ENCODE measurements at regions of chr19 and their contacts with region 1.

Region 1: DNA sequence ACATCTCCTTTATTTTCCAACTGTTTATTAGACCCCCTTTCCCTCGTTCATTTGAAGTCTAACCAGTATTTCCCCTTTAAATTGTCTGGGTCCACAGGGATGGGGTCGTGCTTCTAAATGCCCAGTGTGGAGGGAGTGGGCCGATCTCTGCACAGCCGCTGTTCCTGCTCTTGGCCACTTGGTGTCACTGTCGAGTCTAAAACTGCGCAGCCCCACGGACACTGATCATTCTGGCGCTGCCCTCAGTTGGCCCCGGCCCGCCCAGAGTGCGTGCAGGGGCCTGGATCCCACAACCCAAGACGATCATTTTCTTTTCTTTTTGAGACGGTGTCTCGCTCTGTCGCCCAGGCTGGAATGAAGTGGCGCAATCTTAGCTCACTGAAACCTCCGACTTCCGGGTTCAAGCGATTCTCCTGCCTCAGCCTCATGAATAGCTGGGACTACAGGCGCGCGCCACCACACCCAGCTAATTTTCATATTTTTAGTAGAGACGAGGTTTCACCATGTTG is 12.0 kb downstream of the WDR88 start:
- DNase-seq: peak; percentile 30 to 83 (median 51)
- ATAC-seq: peak; percentile 99
- H3K4me3 ChIP-seq: no peak overlapping the region
- H3K4me3 Mint-ChIP-seq: no peak overlapping the region
- H3K27ac ChIP-seq: no peak overlapping the region
- H3K27ac Mint-ChIP-seq: no peak overlapping the region
- H3K4me1 ChIP-seq: peaks cover 5% of the 10 kb centered on the region
- H3K4me1 Mint-ChIP-seq: peaks cover 5% of the 10 kb centered on the region
- H3K27me3 ChIP-seq: no peaks in the 10 kb centered on the region
- H3K27me3 Mint-ChIP-seq: peaks cover 4% of the 10 kb centered on the region
- CTCF ChIP-seq: peak; percentile 94

Region 2: DNA sequence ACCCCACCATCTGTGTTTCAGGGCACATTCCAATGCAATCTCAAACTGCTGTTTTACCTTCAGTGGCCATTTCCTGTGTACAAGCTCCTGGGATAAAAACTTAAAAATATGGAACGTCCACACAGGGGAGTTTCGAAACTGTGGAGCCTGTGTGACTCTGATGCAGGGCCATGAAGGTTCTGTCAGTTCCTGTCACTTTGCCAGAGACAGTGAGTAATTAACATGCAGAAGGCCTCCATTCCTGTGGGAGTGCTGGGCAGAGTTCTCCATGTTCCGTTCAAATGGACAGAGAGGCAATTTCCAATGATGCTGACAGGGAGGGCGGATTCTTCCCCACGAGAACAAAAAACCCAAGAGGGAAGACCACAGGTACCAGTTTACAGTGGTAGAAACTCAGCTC is 12.4 kb after region 1 on chr19:
- CTCF ChIA-PET with region 1: no interaction called
- POLR2A ChIA-PET with region 1: no interaction called
- intact Hi-C with region 1: no loop called
- DNase-seq: no peak
- ATAC-seq: no peak
- H3K4me3 ChIP-seq: no peak overlapping the region
- H3K4me3 Mint-ChIP-seq: no peak overlapping the region
- H3K27ac ChIP-seq: no peak overlapping the region
- H3K27ac Mint-ChIP-seq: no peak overlapping the region
- H3K4me1 ChIP-seq: peaks cover 36% of the 10 kb centered on the region
- H3K4me1 Mint-ChIP-seq: peaks cover 33% of the 10 kb centered on the region
- H3K27me3 ChIP-seq: no peaks in the 10 kb centered on the region
- H3K27me3 Mint-ChIP-seq: no peaks in the 10 kb centered on the region
- CTCF ChIP-seq: no peak

Region 3: DNA sequence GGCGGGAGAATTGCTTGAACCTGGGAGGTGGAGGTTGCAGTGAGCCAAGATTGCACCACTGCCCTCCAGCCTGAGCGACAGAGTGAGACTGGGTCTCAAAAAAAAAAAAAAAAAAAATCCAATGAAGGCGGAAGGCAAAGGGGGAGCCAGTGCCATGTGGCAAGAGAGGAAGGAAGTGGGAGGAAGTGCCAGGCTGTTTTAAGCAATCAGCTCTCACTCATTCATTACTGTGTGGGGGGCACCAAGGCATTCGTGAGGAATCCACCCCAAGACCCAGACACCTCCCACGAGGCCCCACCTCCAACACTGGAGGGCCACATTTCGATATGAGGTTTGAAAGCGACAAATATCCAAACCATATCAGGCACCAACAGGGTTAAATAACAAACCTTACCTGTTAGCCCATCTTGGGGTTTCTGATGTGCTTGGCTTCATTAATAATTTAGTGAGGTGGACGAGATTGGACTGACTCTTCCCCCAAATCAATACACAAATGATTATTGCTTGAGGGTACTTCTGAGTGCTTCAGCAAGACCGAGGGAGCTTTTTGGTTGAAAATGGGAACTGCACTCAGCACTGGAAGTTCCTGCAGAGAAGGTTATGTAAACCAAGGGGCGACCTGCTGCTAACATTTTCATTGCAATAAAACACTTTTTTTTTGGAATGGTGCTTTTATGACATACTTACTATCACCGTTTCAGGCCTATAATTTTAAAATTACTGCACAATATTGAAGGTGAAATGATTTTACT is 42.7 kb after region 1 on chr19:
- CTCF ChIA-PET with region 1: interaction called, 10 read pairs
- POLR2A ChIA-PET with region 1: no interaction called
- intact Hi-C with region 1: loop called (anchors 1 to 2 kb)
- DNase-seq: peak in 1 of 14 experiments; percentile 25
- ATAC-seq: no peak
- H3K4me3 ChIP-seq: no peak overlapping the region
- H3K4me3 Mint-ChIP-seq: no peak overlapping the region
- H3K27ac ChIP-seq: no peak overlapping the region
- H3K27ac Mint-ChIP-seq: no peak overlapping the region
- H3K4me1 ChIP-seq: peaks cover 5% of the 10 kb centered on the region
- H3K4me1 Mint-ChIP-seq: peaks cover 8% of the 10 kb centered on the region
- H3K27me3 ChIP-seq: peaks cover 0 to under 1% of the 10 kb centered on the region in 2 experiments
- H3K27me3 Mint-ChIP-seq: peaks cover 13% of the 10 kb centered on the region
- CTCF ChIP-seq: no peak

Region 4: DNA sequence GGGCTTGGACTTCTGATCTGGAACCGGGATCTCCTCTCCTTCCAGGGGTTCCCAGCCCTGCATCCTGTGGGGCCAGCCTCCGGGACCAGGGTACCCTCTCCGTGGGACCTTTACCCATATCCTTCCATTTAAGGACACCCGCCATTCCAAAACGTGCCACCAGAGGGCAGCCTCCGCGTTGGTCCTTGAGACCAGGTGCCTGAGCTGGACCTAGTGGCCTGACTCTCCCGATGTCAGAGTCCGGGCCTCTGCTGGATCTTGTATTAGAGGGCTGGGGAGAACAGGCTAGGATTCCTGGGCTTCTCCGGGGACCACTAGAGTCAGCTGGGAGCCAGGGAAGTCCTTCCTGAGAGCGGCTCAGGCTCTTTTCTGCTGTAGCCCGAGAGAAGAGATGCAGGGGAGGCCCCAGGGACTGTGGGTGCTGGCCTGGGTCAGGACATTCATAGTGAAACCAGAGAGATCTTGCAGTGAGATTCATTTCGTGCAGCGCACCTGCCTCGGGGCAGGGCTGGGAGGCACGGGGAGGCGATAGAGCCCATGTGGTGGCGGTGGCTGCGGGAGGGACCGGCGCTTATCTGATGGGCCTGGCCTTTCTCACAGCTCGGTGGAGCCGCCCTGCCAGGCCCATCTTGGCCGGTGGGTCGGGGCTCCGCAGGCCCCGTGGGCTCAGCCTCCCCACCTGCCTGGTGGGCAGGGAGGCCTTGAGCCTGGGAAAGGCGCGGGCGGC is 91.5 kb after region 1 on chr19:
- CTCF ChIA-PET with region 1: no interaction called
- POLR2A ChIA-PET with region 1: no interaction called
- intact Hi-C with region 1: loop called (anchors 2 kb)
- DNase-seq: peak; percentile 63 to 86 (median 76)
- ATAC-seq: peak; percentile 58
- H3K4me3 ChIP-seq: peak overlapping the region; percentile 51
- H3K4me3 Mint-ChIP-seq: peak overlapping the region; percentile 52
- H3K27ac ChIP-seq: no peak overlapping the region
- H3K27ac Mint-ChIP-seq: no peak overlapping the region
- H3K4me1 ChIP-seq: peaks cover 28% of the 10 kb centered on the region
- H3K4me1 Mint-ChIP-seq: peaks cover 6% of the 10 kb centered on the region
- H3K27me3 ChIP-seq: peaks cover 4 to 6% of the 10 kb centered on the region in 2 experiments
- H3K27me3 Mint-ChIP-seq: peaks cover 22% of the 10 kb centered on the region
- CTCF ChIP-seq: peak; percentile 93

Region 5: DNA sequence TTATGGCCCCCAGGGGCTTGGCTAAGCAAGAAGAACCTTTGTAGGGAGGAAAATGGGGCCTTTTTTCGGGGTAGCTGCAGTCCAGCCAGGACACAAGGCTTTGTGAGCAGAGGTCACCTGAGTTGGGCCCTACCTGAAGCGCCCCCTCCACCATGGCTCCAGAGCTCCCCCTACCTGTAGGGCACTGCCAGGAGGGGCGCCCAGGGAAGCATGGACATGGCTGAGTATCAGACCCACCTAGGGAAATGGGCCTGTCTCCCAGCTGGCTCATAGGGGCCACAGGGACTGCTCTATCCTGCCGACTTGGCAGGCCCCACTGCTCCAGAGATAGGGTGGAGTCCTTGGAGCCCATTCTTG is 167.4 kb after region 1 on chr19:
- CTCF ChIA-PET with region 1: no interaction called
- POLR2A ChIA-PET with region 1: no interaction called
- intact Hi-C with region 1: no loop called
- DNase-seq: no peak
- ATAC-seq: no peak
- H3K4me3 ChIP-seq: no peak overlapping the region
- H3K4me3 Mint-ChIP-seq: no peak overlapping the region
- H3K27ac ChIP-seq: no peak overlapping the region
- H3K27ac Mint-ChIP-seq: no peak overlapping the region
- H3K4me1 ChIP-seq: no peaks in the 10 kb centered on the region
- H3K4me1 Mint-ChIP-seq: no peaks in the 10 kb centered on the region
- H3K27me3 ChIP-seq: peaks cover 0 to 4% of the 10 kb centered on the region in 2 experiments
- H3K27me3 Mint-ChIP-seq: peaks cover 46% of the 10 kb centered on the region
- CTCF ChIP-seq: no peak

Region 6: GRCh38 chr19:33438007-33438671 is 294.2 kb after region 1 on chr19:
- CTCF ChIA-PET with region 1: no interaction called
- POLR2A ChIA-PET with region 1: no interaction called
- intact Hi-C with region 1: no loop called
- DNase-seq: no peak
- ATAC-seq: no peak
- H3K4me3 ChIP-seq: no peak overlapping the region
- H3K4me3 Mint-ChIP-seq: no peak overlapping the region
- H3K27ac ChIP-seq: no peak overlapping the region
- H3K27ac Mint-ChIP-seq: no peak overlapping the region
- H3K4me1 ChIP-seq: peaks cover 3% of the 10 kb centered on the region
- H3K4me1 Mint-ChIP-seq: no peaks in the 10 kb centered on the region
- H3K27me3 ChIP-seq: no peaks in the 10 kb centered on the region
- H3K27me3 Mint-ChIP-seq: no peaks in the 10 kb centered on the region
- CTCF ChIP-seq: no peak